ENCODE measurements at regions of chr19 and their contacts with region 1.

Region 1: DNA sequence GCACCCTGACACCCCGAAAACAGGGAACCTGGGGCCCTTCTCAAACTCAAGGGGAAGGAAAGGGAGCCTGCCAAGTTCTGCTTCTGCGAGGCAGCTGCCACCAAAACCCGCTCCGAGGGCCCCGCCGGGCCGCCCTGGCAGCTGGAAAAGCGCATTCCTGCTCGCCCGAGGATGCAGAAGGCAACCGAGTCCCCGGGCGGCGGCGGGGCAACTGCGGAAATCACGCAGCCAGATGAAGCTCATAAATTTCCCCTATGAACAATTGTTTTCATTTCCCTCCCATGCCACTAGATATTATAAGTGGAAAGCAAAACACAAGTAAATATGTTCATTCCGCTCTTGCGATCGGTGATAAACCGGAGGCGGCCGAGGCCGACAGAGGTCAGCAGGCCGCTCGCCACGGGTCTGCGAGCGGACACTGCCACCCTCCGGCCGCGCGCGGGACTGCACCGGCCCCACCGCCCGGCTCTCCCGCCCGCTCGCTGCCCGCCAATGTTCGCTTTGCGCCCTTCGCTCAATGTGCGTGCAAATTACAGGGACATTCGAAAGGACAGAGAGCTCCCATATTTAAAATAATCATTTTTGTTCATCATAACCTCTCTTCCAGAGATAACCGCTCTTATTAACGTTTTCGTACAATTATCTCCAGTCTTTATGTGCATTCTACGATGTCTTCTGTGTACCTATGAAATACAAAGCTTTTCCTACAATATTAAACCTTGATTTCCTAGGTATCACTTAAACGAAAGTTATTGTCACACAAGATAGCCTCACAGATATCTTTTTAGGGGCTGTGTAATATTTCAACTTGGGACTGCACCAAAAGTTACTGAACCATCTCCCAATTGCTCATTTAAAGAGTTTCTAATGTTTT is 120.8 kb upstream of the ZNF507 start:
- DNase-seq: peak; percentile 47
- H3K4me3 ChIP-seq: no peak overlapping the region
- H3K27ac ChIP-seq: no peak overlapping the region
- H3K4me1 ChIP-seq: no peaks in the 10 kb centered on the region
- H3K27me3 ChIP-seq: peaks cover 0 to 7% of the 10 kb centered on the region in 2 experiments
- CTCF ChIP-seq: peak; percentile 91 to 96
- POLR2A ChIP-seq: no peak

Region 2: GRCh38 chr19:30669329-30670010 is 1555.1 kb before region 1 on chr19:
- CTCF ChIA-PET with region 1: interaction called, 136 read pairs
- POLR2A ChIA-PET with region 1: no interaction called
- dilution Hi-C with region 1: no loop called
- intact Hi-C with region 1: loop called (anchors 1 kb)
- DNase-seq: peak; percentile 29
- H3K4me3 ChIP-seq: no peak overlapping the region
- H3K27ac ChIP-seq: no peak overlapping the region
- H3K4me1 ChIP-seq: no peaks in the 10 kb centered on the region
- H3K27me3 ChIP-seq: no peaks in the 10 kb centered on the region
- CTCF ChIP-seq: peak; percentile 68 to 85
- POLR2A ChIP-seq: no peak

Region 3: DNA sequence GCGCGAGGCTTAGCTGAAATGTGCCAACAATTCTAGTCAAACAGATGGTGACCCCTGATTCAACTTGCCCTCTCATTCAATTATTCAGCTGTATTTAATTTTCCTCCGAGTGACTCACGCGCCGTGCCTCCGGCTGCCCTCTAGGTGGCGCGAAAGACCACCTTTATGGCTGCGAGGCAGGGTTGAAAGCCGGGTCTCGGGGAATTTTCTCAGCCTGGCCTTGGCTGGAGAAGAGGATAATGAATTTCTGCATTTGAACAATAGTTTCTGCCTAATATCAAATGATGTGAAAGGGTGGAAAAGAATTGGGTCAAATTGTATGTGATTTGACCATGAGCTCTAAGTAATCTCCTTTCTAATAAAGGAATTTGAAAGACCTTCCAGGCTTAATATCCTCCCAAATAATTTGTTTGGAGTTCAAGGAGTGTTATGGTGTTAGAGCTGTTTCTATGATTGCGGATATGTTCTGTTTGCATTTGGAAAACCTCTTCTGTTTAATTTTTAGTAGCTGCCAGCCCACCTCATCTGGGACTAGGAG is 1541.5 kb before region 1 on chr19:
- CTCF ChIA-PET with region 1: interaction called, 117 read pairs
- POLR2A ChIA-PET with region 1: no interaction called
- dilution Hi-C with region 1: no loop called
- intact Hi-C with region 1: loop called (anchors 1 kb)
- DNase-seq: peak; percentile 83
- H3K4me3 ChIP-seq: no peak overlapping the region
- H3K27ac ChIP-seq: no peak overlapping the region
- H3K4me1 ChIP-seq: peaks cover 4% of the 10 kb centered on the region
- H3K27me3 ChIP-seq: no peaks in the 10 kb centered on the region
- CTCF ChIP-seq: peak; percentile 78 to 94
- POLR2A ChIP-seq: no peak

Region 4: GRCh38 chr19:31356587-31357314 is 867.9 kb before region 1 on chr19:
- CTCF ChIA-PET with region 1: interaction called, 5 read pairs
- POLR2A ChIA-PET with region 1: no interaction called
- dilution Hi-C with region 1: no loop called
- intact Hi-C with region 1: loop called (anchors 2 kb)
- DNase-seq: no peak
- H3K4me3 ChIP-seq: no peak overlapping the region
- H3K27ac ChIP-seq: no peak overlapping the region
- H3K4me1 ChIP-seq: no peaks in the 10 kb centered on the region
- H3K27me3 ChIP-seq: peaks cover 48 to 53% of the 10 kb centered on the region in 2 experiments
- CTCF ChIP-seq: peak; percentile 30 to 66
- POLR2A ChIP-seq: no peak

Region 5: GRCh38 chr19:32201636-32202051 is 23.0 kb before region 1 on chr19:
- CTCF ChIA-PET with region 1: interaction called, 9 read pairs
- POLR2A ChIA-PET with region 1: no interaction called
- dilution Hi-C with region 1: no loop called
- intact Hi-C with region 1: loop called (anchors 1 kb)
- DNase-seq: peak; percentile 61
- H3K4me3 ChIP-seq: no peak overlapping the region
- H3K27ac ChIP-seq: no peak overlapping the region
- H3K4me1 ChIP-seq: peaks cover 6% of the 10 kb centered on the region
- H3K27me3 ChIP-seq: no peaks in the 10 kb centered on the region
- CTCF ChIP-seq: no peak
- POLR2A ChIP-seq: no peak

Measured in endothelial cell of umbilical vein (primary cell).